ENCODE measurements at regions of chr5 and their contacts with region 1.

Region 1: DNA sequence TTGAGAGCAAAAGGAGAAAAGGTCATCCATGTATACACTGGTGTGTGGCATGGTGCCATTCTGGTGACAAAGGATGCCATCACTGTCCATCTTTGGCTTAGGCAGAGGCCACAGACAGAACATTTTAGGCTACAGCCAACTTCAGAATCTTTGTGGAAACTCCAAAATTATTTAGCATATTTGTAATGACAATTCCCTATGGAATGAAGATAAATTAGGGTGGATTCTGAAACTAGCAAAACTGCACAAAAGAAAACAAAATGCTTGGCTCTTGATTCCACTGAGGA is 92.5 kb downstream of the FBXW11 start:
- DNase-seq: no peak
- H3K4me3 Mint-ChIP-seq: no peak overlapping the region
- H3K27ac Mint-ChIP-seq: no peak overlapping the region
- H3K4me1 Mint-ChIP-seq: peaks cover 27% of the 10 kb centered on the region
- H3K27me3 Mint-ChIP-seq: no peaks in the 10 kb centered on the region
- CTCF ChIP-seq: no peak

Region 2: DNA sequence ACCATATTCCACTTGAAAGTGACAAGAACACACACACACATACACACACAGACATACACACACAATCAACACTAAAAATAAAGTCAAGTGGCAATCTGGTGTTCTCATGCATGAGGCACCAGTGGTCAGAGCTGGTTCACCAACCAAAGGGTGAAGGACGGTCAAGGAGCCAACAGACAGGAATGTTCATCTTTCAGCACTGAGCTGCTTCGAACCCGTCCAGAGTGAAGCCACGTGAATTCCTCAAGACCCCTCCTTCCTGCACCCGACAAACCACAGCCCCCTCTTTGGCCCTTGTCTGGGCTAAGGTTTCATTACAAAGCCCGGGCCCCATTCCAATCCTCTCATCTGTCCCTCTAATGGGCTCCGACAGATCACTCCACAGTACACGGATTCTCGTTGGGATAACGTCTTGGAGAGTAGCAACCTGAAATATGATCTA is 212.8 kb before region 1 on chr5:
- CTCF ChIA-PET with region 1: no interaction called
- POLR2A ChIA-PET with region 1: no interaction called
- intact Hi-C with region 1: no loop called
- DNase-seq: no peak
- H3K4me3 Mint-ChIP-seq: no peak overlapping the region
- H3K27ac Mint-ChIP-seq: no peak overlapping the region
- H3K4me1 Mint-ChIP-seq: no peaks in the 10 kb centered on the region
- H3K27me3 Mint-ChIP-seq: peaks cover 22% of the 10 kb centered on the region
- CTCF ChIP-seq: no peak

Region 3: GRCh38 chr5:171858303-171858702 is 55.6 kb before region 1 on chr5:
- CTCF ChIA-PET with region 1: interaction called, 10 read pairs
- POLR2A ChIA-PET with region 1: no interaction called
- intact Hi-C with region 1: no loop called
- DNase-seq: peak; percentile 36
- H3K4me3 Mint-ChIP-seq: no peak overlapping the region
- H3K27ac Mint-ChIP-seq: no peak overlapping the region
- H3K4me1 Mint-ChIP-seq: peaks cover 10% of the 10 kb centered on the region
- H3K27me3 Mint-ChIP-seq: no peaks in the 10 kb centered on the region
- CTCF ChIP-seq: peak; percentile 28

Region 4: GRCh38 chr5:171927345-171927941 is 13.5 kb after region 1 on chr5:
- CTCF ChIA-PET with region 1: interaction called, 22 read pairs
- POLR2A ChIA-PET with region 1: no interaction called
- intact Hi-C with region 1: no loop called
- DNase-seq: no peak
- H3K4me3 Mint-ChIP-seq: no peak overlapping the region
- H3K27ac Mint-ChIP-seq: no peak overlapping the region
- H3K4me1 Mint-ChIP-seq: peaks cover 15% of the 10 kb centered on the region
- H3K27me3 Mint-ChIP-seq: no peaks in the 10 kb centered on the region
- CTCF ChIP-seq: peak; percentile 44

Region 5: DNA sequence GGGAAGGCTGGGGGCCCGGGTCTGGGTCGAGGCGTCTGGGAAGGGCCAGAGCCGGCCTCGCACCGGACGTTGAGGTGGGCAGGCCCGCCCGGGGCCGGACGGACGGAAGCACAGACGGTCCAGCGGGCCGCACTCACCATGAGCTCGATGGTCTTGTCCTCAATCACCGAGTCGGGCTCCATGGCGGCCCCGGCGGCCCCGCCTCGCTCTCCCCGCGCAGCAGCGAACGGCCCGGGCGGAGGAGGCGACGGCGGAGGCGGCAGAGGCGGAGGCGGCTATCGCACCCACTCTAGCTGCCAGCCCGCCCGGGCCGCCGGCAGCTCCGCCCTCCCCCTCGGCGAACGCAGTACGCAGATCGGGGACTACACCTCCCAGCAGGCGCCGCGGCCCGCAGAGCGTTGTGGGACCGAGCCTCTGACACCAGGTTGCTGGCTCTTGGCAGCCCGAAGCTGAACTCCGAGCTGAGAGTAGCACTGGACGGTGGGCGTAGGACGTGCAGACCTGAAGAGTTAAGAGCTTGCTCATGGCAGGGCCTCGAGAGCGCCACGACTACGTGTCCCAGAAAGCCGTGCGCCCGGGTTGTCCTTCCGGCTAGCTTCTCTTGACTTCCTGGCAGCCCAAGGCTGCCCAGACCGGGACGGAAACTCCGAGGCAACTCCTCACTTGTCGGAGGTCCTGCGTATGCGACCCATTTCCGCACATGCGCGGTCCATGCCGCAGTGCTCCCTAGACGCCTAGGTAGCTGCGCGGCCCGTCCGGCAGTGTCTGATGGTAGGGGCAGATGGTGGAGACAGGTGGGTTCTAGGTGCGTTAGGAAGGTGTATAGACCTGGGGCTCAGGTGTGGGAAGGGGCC is 92.6 kb after region 1 on chr5 and contains the start of gene FBXW11:
- CTCF ChIA-PET with region 1: interaction called, 153 read pairs
- POLR2A ChIA-PET with region 1: interaction called, 40 read pairs
- intact Hi-C with region 1: loop called (anchors 1 kb)
- DNase-seq: peak; percentile 99
- H3K4me3 Mint-ChIP-seq: peak within 1 kb of the TSS; percentile 90
- H3K27ac Mint-ChIP-seq: peak within 1 kb of the TSS; percentile 95
- H3K4me1 Mint-ChIP-seq: peaks cover 51% of the 10 kb centered on the region
- H3K27me3 Mint-ChIP-seq: no peaks in the 10 kb centered on the region
- CTCF ChIP-seq: no peak
- total RNA-seq, gene FBXW11: 64.7 and 82.7 TPM in 2 replicates

Region 6: GRCh38 chr5:172044631-172045314 is 130.8 kb after region 1 on chr5:
- CTCF ChIA-PET with region 1: interaction called, 124 read pairs
- POLR2A ChIA-PET with region 1: interaction called, 6 read pairs
- intact Hi-C with region 1: loop called (anchors 1 kb)
- DNase-seq: no peak
- H3K4me3 Mint-ChIP-seq: no peak overlapping the region
- H3K27ac Mint-ChIP-seq: peak overlapping the region; percentile 52
- H3K4me1 Mint-ChIP-seq: peaks cover 6% of the 10 kb centered on the region
- H3K27me3 Mint-ChIP-seq: no peaks in the 10 kb centered on the region
- CTCF ChIP-seq: no peak

Region 7: DNA sequence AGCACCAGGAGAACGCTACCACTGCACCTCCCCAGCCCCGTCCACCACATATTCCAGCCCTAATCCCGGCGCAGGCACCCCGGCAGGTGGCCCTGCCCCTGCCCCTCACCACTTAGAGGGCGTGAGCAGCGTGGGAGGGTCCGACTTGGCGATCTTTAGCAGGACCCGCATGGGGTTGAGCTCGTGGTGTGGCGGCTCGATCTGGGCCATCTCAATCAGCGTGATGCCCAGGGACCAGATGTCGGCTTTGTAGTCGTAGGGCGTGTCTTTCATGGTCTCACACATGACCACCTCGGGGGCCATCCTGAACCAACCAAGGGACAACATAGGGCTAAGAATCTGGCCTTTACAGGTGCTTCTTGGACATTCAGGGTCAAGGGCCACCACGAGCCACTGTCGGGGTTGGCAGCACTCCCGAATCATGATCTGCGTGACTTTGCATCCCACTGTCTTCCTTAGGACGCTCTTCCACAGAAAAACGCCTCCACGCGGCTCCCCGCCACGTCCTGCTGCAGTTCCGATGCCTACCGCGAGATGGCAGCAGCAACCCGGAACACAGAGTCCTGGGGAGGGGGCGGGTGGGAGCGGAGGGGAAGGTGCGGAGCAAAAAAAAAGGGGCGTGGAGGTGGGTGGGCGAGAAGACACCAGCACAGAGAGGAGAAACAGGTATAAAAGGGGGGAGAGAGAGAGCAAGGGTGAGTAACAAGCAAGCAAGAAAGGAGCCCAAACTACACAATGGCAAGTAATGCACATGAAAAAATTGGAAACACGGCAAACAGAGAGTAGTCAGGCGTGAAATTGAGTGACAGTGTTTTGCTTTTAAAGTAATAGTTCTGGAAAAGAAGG is 192.8 kb after region 1 on chr5:
- CTCF ChIA-PET with region 1: interaction called, 5 read pairs
- POLR2A ChIA-PET with region 1: interaction called, 3 read pairs
- intact Hi-C with region 1: loop called (anchors 5 kb)
- DNase-seq: peak; percentile 47
- H3K4me3 Mint-ChIP-seq: peak overlapping the region; percentile 46
- H3K27ac Mint-ChIP-seq: no peak overlapping the region
- H3K4me1 Mint-ChIP-seq: peaks cover 65% of the 10 kb centered on the region
- H3K27me3 Mint-ChIP-seq: no peaks in the 10 kb centered on the region
- CTCF ChIP-seq: peak; percentile 99

Region 8: DNA sequence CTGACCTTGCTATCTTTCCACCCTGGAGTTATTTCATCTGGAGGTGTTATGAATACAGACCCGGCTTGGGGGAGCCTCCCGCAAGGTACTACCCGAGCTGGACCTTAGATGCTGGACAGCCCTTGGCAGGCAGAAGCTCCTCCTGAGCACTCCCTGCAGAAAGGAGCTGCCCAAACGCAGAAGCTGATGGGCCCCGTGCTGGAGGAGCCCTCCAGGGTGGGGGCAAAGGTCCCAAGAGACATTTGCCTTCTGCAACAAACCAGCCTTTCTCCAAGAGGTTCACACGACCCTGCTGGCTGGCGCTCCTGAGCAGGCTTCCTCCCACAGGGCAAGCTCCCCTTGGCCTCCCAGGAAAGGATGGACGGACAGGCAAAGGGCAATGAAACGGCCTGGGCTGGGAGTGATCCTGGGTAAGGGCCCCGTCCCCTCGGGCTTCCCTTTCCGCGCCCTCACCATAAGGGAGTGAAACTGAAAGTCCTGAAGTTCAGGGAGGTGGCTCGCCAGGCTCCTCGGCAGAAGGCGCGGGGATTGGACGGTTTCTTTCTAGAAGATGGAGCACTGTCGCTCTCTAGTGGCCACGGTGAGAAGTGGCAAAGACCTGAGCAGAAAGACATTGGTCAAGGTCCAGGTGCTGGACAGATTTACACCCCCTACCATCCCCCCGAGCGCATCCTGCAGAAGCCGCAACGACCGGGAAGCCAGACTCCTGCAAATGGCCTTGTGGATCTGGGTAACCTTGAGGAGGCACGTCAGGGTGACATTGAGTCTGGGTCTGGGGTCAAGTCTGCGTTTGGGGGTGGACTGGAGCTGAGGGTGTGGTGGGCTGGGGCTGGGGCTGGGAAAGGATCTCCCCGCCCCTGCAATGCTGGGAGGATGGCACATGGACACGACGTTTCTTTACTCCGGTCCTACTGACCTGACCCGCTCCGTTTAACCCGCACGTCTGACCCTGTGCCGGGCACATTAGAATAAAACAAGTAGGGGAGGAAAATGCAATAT is 783.5 kb after region 1 on chr5:
- CTCF ChIA-PET with region 1: no interaction called
- POLR2A ChIA-PET with region 1: no interaction called
- intact Hi-C with region 1: loop called (anchors 2 kb)
- DNase-seq: peak; percentile 94
- H3K4me3 Mint-ChIP-seq: peak overlapping the region; percentile 82
- H3K27ac Mint-ChIP-seq: peak overlapping the region; percentile 82
- H3K4me1 Mint-ChIP-seq: peaks cover 17% of the 10 kb centered on the region
- H3K27me3 Mint-ChIP-seq: peaks cover 14% of the 10 kb centered on the region
- CTCF ChIP-seq: peak; percentile 99

Measured in MCF 10A (cell line).